ENCODE measurements at regions of chr2 and their contacts with region 1.

Region 1: DNA sequence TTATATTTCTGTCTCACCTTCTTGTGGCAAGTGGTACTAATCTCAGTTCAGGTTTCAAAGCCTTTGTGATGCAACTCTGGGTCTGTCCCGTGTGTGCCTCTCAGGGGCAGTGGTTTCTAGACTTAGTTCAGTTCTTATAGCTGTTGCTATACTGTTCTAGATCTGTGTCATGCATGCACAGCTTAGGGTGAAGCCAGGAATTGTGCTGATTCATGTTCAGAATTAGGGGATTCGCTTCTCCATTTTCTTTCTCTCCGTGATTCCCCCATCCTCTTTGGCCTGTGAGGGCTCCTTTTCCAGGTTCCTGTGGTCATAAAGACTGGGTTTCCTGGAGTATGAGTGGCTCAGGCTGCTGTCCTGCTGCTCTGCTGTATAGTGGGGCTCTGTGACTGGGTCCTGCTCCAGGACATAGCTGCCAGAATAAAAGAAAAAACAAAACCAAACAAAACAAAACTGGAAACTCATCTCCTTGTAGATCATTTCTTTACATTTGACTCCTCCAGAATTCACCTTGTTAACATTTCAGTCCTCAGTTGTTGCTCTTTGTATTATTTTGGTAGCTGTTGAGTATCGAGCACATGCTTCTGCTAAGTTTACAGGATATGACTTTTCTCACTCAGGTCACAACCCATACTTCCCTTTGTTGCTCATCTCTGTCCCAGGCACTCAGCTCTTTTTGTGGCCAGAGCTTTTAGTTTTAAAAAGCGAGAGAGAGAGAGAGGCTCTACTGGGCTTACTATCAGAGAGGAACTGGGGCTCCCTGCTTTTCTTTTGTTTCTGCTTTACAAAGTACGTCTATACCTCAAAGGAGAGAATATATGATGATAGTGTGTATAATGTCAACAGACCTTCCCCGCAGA is 34.2 kb downstream of the CERS6 start:
- DNase-seq: peak in 8 of 9 experiments; percentile 9 to 63 (median 32)
- ATAC-seq: peak; percentile 80
- H3K4me3 ChIP-seq: peak overlapping the region; percentile 18 to 45
- H3K4me3 Mint-ChIP-seq: peak overlapping the region; percentile 77
- H3K27ac ChIP-seq: peak overlapping the region; percentile 31 to 47
- H3K27ac Mint-ChIP-seq: peak overlapping the region; percentile 86
- H3K4me1 ChIP-seq: peaks cover 24% of the 10 kb centered on the region
- H3K4me1 Mint-ChIP-seq: peaks cover 63% of the 10 kb centered on the region
- H3K27me3 ChIP-seq: no peaks in the 10 kb centered on the region
- H3K27me3 Mint-ChIP-seq: no peaks in the 10 kb centered on the region
- CTCF ChIP-seq: no peak

Region 2: GRCh38 chr2:168375195-168375798 is 114.9 kb before region 1 on chr2:
- CTCF ChIA-PET with region 1: interaction called, 3 read pairs
- POLR2A ChIA-PET with region 1: no interaction called
- intact Hi-C with region 1: loop called in 1 of 2 experiments (anchors 10 kb)
- DNase-seq: peak in 1 of 9 experiments; percentile 9
- ATAC-seq: no peak
- H3K4me3 ChIP-seq: no peak overlapping the region
- H3K4me3 Mint-ChIP-seq: no peak overlapping the region
- H3K27ac ChIP-seq: no peak overlapping the region
- H3K27ac Mint-ChIP-seq: no peak overlapping the region
- H3K4me1 ChIP-seq: peaks cover 10% of the 10 kb centered on the region
- H3K4me1 Mint-ChIP-seq: peaks cover 25% of the 10 kb centered on the region
- H3K27me3 ChIP-seq: no peaks in the 10 kb centered on the region
- H3K27me3 Mint-ChIP-seq: no peaks in the 10 kb centered on the region
- CTCF ChIP-seq: peak; percentile 49

Region 3: GRCh38 chr2:168434146-168434545 is 56.1 kb before region 1 on chr2:
- CTCF ChIA-PET with region 1: no interaction called
- POLR2A ChIA-PET with region 1: interaction called, 3 read pairs
- intact Hi-C with region 1: loop called in 1 of 2 experiments (anchors 2 kb)
- DNase-seq: peak in 1 of 9 experiments; percentile 17
- ATAC-seq: no peak
- H3K4me3 ChIP-seq: no peak overlapping the region
- H3K4me3 Mint-ChIP-seq: no peak overlapping the region
- H3K27ac ChIP-seq: no peak overlapping the region
- H3K27ac Mint-ChIP-seq: no peak overlapping the region
- H3K4me1 ChIP-seq: peaks cover 49% of the 10 kb centered on the region
- H3K4me1 Mint-ChIP-seq: peaks cover 64% of the 10 kb centered on the region
- H3K27me3 ChIP-seq: no peaks in the 10 kb centered on the region
- H3K27me3 Mint-ChIP-seq: no peaks in the 10 kb centered on the region
- CTCF ChIP-seq: no peak

Region 4: DNA sequence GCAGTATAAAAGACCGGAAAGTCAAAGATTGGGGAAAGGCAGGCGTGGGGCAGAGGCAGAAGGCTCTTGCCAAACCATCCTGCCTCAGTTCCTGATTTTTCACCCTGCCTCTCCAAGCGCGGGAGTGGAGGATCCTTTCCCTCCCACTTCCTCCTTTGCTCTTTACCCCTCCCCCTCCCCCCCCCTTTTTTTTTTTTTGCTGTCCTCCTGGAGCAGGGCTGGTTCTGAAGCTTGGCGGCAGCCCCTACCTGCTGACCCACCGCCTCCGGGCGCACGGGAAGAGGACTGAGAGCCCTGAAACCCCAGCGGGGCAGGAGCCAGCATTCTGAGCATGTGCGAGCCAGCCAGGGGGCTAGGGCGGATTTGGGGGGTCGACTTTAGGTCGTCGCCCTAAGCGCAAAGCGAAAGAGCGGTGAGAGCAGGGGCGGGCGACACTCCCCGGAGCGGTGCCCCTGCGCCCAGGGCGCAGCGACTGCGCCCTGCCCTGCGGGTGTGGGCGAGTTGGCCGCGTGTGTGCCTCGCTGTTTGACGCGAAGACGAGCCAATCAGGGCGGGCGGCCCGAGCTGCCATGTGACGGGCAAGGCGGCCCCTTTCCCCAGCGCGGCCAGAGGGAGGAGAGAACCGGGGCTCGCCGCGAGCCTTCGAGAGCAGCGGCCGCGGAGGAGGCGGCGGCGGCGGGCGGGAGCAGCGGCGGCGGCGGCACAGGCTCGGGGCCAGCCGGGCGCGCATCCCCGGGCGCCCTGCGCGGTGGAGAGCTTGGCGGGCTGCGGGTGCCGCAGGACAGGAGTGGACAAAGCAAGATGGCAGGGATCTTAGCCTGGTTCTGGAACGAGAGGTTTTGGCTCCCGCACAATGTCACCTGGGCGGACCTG is 34.4 kb before region 1 on chr2 and contains the start of gene CERS6:
- CTCF ChIA-PET with region 1: no interaction called
- POLR2A ChIA-PET with region 1: interaction called, 3 read pairs
- intact Hi-C with region 1: loop called (anchors 5 kb)
- DNase-seq: peak; percentile 46 to 87 (median 73)
- ATAC-seq: peak; percentile 73
- H3K4me3 ChIP-seq: peak within 1 kb of the TSS; percentile 72 to 77
- H3K4me3 Mint-ChIP-seq: no peak within 1 kb of the TSS
- H3K27ac ChIP-seq: peak within 1 kb of the TSS in 1 of 2 experiments; percentile 44
- H3K27ac Mint-ChIP-seq: peak within 1 kb of the TSS; percentile 74
- H3K4me1 ChIP-seq: peaks cover 32% of the 10 kb centered on the region
- H3K4me1 Mint-ChIP-seq: peaks cover 40% of the 10 kb centered on the region
- H3K27me3 ChIP-seq: no peaks in the 10 kb centered on the region
- H3K27me3 Mint-ChIP-seq: no peaks in the 10 kb centered on the region
- CTCF ChIP-seq: no peak
- total RNA-seq, gene CERS6: 17.9 to 18.5 TPM

Region 5: DNA sequence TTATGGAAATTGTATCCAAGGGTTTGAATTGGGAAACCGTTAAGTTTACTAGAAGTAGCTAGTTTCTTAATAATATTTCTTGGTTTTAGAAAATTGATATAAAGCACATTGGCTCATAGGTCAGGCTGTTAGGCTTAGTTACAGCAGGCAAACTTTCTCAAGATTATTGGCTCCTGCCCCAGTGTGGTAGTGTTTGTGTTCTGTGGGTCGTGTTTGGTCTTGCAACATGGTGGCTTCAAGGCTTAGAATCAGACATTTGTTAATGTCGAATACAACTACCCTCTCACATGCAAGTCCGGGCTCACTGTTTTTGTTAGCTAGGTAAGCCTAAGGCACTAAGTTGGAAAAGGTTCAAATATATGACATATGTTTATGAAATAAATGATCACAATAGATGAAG is 14.6 kb before region 1 on chr2:
- CTCF ChIA-PET with region 1: interaction called, 3 read pairs
- POLR2A ChIA-PET with region 1: interaction called, 3 read pairs
- intact Hi-C with region 1: loop called in 1 of 2 experiments (anchors 2 kb)
- DNase-seq: no peak
- ATAC-seq: no peak
- H3K4me3 ChIP-seq: no peak overlapping the region
- H3K4me3 Mint-ChIP-seq: no peak overlapping the region
- H3K27ac ChIP-seq: no peak overlapping the region
- H3K27ac Mint-ChIP-seq: peak overlapping the region; percentile 30
- H3K4me1 ChIP-seq: peaks cover 19% of the 10 kb centered on the region
- H3K4me1 Mint-ChIP-seq: peaks cover 54% of the 10 kb centered on the region
- H3K27me3 ChIP-seq: no peaks in the 10 kb centered on the region
- H3K27me3 Mint-ChIP-seq: no peaks in the 10 kb centered on the region
- CTCF ChIP-seq: no peak

Region 6: GRCh38 chr2:168543037-168543436 is 52.8 kb after region 1 on chr2:
- CTCF ChIA-PET with region 1: no interaction called
- POLR2A ChIA-PET with region 1: interaction called, 4 read pairs
- intact Hi-C with region 1: loop called in 1 of 2 experiments (anchors 5 kb)
- DNase-seq: peak in 2 of 9 experiments; percentile 15 to 40
- ATAC-seq: peak; percentile 71
- H3K4me3 ChIP-seq: no peak overlapping the region
- H3K4me3 Mint-ChIP-seq: no peak overlapping the region
- H3K27ac ChIP-seq: no peak overlapping the region
- H3K27ac Mint-ChIP-seq: peak overlapping the region; percentile 19
- H3K4me1 ChIP-seq: peaks cover 31% of the 10 kb centered on the region
- H3K4me1 Mint-ChIP-seq: peaks cover 51% of the 10 kb centered on the region
- H3K27me3 ChIP-seq: no peaks in the 10 kb centered on the region
- H3K27me3 Mint-ChIP-seq: no peaks in the 10 kb centered on the region
- CTCF ChIP-seq: no peak

Region 7: GRCh38 chr2:168758970-168759820 is 268.9 kb after region 1 on chr2:
- CTCF ChIA-PET with region 1: no interaction called
- POLR2A ChIA-PET with region 1: no interaction called
- intact Hi-C with region 1: loop called in 1 of 2 experiments (anchors 10 kb)
- DNase-seq: peak in 4 of 9 experiments; percentile 20 to 71 (median 45)
- ATAC-seq: peak; percentile 81
- H3K4me3 ChIP-seq: no peak overlapping the region
- H3K4me3 Mint-ChIP-seq: no peak overlapping the region
- H3K27ac ChIP-seq: no peak overlapping the region
- H3K27ac Mint-ChIP-seq: peak overlapping the region; percentile 1
- H3K4me1 ChIP-seq: peaks cover 36% of the 10 kb centered on the region
- H3K4me1 Mint-ChIP-seq: peaks cover 48% of the 10 kb centered on the region
- H3K27me3 ChIP-seq: no peaks in the 10 kb centered on the region
- H3K27me3 Mint-ChIP-seq: no peaks in the 10 kb centered on the region
- CTCF ChIP-seq: no peak

Region 8: DNA sequence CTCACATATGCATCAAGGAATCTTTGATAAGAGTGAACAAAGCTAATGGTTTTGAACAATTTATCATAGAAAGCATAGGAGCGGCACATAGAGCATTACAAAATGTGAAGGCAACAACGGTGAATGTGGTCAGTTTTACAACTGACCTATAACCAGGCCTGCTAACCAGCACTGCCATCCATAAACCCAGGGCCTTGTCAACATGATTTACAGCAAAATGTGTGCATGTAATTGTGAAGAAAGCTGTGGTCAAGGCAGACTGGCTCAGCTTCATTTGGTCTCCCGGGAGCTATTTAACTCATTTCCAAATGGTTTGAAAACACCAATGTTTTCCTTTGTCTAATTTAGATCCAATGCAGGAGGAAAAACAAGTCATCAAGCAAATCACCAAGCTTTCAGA is 698.9 kb after region 1 on chr2:
- CTCF ChIA-PET with region 1: no interaction called
- POLR2A ChIA-PET with region 1: no interaction called
- intact Hi-C with region 1: no loop called
- DNase-seq: no peak
- ATAC-seq: no peak
- H3K4me3 ChIP-seq: no peak overlapping the region
- H3K4me3 Mint-ChIP-seq: no peak overlapping the region
- H3K27ac ChIP-seq: no peak overlapping the region
- H3K27ac Mint-ChIP-seq: no peak overlapping the region
- H3K4me1 ChIP-seq: no peaks in the 10 kb centered on the region
- H3K4me1 Mint-ChIP-seq: no peaks in the 10 kb centered on the region
- H3K27me3 ChIP-seq: no peaks in the 10 kb centered on the region
- H3K27me3 Mint-ChIP-seq: peaks cover 6% of the 10 kb centered on the region
- CTCF ChIP-seq: no peak

Measured in CD8-positive, alpha-beta T cell (primary cell).